Calu3 (cell line): ENCODE measurements at regions of chr3 and their contacts with region 1.

Region 1: DNA sequence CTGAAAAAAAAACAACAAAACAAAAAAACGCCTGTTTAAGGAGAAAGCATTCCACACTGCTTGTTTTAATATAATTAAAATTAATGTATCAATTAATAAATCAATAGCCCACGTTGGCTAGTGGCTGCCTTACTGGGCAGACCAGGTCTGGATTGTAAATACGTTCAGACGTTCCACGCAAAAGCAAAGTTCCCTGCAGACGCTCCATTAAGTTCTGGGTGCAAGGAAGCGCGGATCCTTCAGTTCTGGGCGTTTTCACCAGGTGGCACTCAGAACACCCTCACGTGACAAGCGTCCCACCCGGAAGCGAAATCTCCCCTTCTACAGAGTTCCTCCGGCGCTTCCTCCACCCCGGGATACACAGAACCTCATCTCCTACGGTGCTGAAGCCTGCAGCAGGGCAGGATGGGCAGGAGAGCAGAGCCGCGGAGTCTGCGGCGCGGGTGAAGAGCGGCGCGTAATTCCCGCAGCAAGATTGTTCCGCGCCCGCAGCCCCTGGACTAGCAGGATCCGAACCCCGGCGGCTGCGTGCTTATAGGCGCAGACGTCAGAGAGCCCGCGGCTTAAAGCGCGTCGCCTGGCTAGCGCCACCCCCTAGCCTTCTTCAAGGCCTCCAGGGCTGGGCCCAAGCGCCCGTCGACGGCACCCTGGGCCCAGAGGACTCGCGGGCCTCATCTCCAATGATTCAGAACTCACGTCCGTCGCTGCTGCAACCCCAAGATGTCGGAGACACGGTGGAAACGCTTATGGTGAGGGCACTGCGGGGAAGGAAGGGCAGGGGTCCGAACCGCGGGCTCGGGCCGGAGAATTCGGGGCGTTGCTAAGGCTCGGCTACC is at the start of gene SLC25A38:
- DNase-seq: peak; percentile 76
- H3K4me3 Mint-ChIP-seq: peak within 1 kb of the TSS; percentile 99
- H3K27ac Mint-ChIP-seq: peak within 1 kb of the TSS; percentile 97
- H3K4me1 Mint-ChIP-seq: peaks cover 36% of the 10 kb centered on the region
- H3K27me3 Mint-ChIP-seq: no peaks in the 10 kb centered on the region
- CTCF ChIP-seq: peak; percentile 16
- total RNA-seq, gene SLC25A38: 23.6 and 24.9 TPM in 2 replicates

Region 2: GRCh38 chr3:39332525-39332924 is 50.7 kb before region 1 on chr3:
- CTCF ChIA-PET with region 1: no interaction called
- intact Hi-C with region 1: loop called (anchors 5 kb)
- DNase-seq: no peak
- H3K4me3 Mint-ChIP-seq: no peak overlapping the region
- H3K27ac Mint-ChIP-seq: no peak overlapping the region
- H3K4me1 Mint-ChIP-seq: peaks cover 9% of the 10 kb centered on the region
- H3K27me3 Mint-ChIP-seq: no peaks in the 10 kb centered on the region
- CTCF ChIP-seq: no peak